ENCODE measurements at regions of chr1 and their contacts with region 1.

Region 1: DNA sequence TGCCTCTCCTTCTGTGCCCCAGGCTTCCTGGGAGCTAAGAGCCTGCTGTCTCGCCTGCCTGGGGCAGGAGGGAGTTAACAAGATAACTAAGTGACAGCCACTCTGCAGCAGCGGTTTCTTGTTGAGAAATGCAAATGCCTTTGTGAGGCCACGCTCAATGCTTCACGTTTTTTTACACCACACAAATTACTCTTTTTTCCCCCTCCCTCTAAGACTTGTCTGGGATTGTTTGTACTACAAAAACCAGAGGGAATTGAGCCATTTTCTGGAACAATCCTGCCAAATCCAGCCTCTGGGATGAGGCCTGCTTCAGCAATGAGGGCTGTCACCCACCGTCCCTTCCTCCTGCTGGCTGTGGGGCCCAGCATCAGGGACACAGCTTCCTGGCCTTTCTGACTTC is 119.6 kb downstream of the ACTL8 start:
- DNase-seq: peak; percentile 92
- H3K4me3 ChIP-seq: no peak overlapping the region
- H3K27me3 ChIP-seq: no peaks in the 10 kb centered on the region
- CTCF ChIP-seq: no peak

Region 2: GRCh38 chr1:17587989-17588685 is 286.6 kb before region 1 on chr1:
- CTCF ChIA-PET with region 1: no interaction called
- POLR2A ChIA-PET with region 1: interaction called, 18 read pairs
- DNase-seq: peak; percentile 37
- H3K4me3 ChIP-seq: no peak overlapping the region
- H3K27me3 ChIP-seq: no peaks in the 10 kb centered on the region
- CTCF ChIP-seq: no peak